ENCODE measurements at regions of chr2 and their contacts with region 1.

Region 1: GRCh38 chr2:205680067-205680466 is 2.2 kb upstream of the NRP2 start:
- DNase-seq: peak; percentile 79
- H3K4me3 ChIP-seq: no peak overlapping the region
- H3K27ac ChIP-seq: no peak overlapping the region
- H3K4me1 ChIP-seq: peaks cover 27% of the 10 kb centered on the region
- H3K27me3 ChIP-seq: no peaks in the 10 kb centered on the region
- CTCF ChIP-seq: peak; percentile 67 to 72
- POLR2A ChIP-seq: no peak

Region 2: GRCh38 chr2:204072443-204073324 is 1607.4 kb before region 1 on chr2:
- CTCF ChIA-PET with region 1: interaction called, 13 read pairs
- POLR2A ChIA-PET with region 1: no interaction called
- dilution Hi-C with region 1: no loop called
- intact Hi-C with region 1: loop called (anchors 1 kb)
- DNase-seq: peak; percentile 38
- H3K4me3 ChIP-seq: no peak overlapping the region
- H3K27ac ChIP-seq: no peak overlapping the region
- H3K4me1 ChIP-seq: no peaks in the 10 kb centered on the region
- H3K27me3 ChIP-seq: peaks cover 8 to 16% of the 10 kb centered on the region in 2 experiments
- CTCF ChIP-seq: peak; percentile 52 to 62
- POLR2A ChIP-seq: no peak

Region 3: GRCh38 chr2:204260162-204260877 is 1419.7 kb before region 1 on chr2:
- CTCF ChIA-PET with region 1: interaction called, 138 read pairs
- POLR2A ChIA-PET with region 1: interaction called, 4 read pairs
- dilution Hi-C with region 1: no loop called
- intact Hi-C with region 1: loop called (anchors 1 kb)
- DNase-seq: peak; percentile 86
- H3K4me3 ChIP-seq: no peak overlapping the region
- H3K27ac ChIP-seq: no peak overlapping the region
- H3K4me1 ChIP-seq: peaks cover 6% of the 10 kb centered on the region
- H3K27me3 ChIP-seq: peaks cover 0 to 2% of the 10 kb centered on the region in 2 experiments
- CTCF ChIP-seq: peak; percentile 63 to 72
- POLR2A ChIP-seq: no peak

Region 4: GRCh38 chr2:204691911-204692510 is 988.1 kb before region 1 on chr2:
- CTCF ChIA-PET with region 1: interaction called, 32 read pairs
- POLR2A ChIA-PET with region 1: interaction called, 4 read pairs
- dilution Hi-C with region 1: no loop called
- intact Hi-C with region 1: loop called (anchors 1 kb)
- DNase-seq: peak; percentile 90
- H3K4me3 ChIP-seq: no peak overlapping the region
- H3K27ac ChIP-seq: peak overlapping the region; percentile 36
- H3K4me1 ChIP-seq: peaks cover 18% of the 10 kb centered on the region
- H3K27me3 ChIP-seq: no peaks in the 10 kb centered on the region
- CTCF ChIP-seq: peak; percentile 68 to 72
- POLR2A ChIP-seq: no peak

Region 5: DNA sequence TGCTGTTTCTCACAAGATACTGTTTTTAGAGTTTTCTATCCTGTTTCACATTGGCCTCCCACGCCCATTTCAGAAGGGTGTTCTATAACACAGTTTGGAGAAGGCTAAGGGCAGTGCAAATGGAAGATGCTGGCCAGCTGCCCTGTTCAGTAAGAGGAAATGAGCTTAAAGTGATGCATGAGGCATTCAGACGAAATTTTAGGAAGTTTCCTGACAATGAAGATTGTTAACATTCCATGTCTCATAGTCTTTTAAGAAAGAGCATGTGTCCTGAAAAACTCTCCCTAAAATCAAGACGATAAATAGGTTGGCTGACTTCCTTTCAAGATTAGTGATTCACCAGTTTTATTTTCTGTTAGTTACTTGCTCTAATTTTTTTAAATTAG is 481.9 kb before region 1 on chr2:
- CTCF ChIA-PET with region 1: interaction called, 8 read pairs
- POLR2A ChIA-PET with region 1: interaction called, 3 read pairs
- dilution Hi-C with region 1: no loop called
- intact Hi-C with region 1: loop called (anchors 5 kb)
- DNase-seq: peak; percentile 83
- H3K4me3 ChIP-seq: peak overlapping the region in 1 of 3 experiments; percentile 15
- H3K27ac ChIP-seq: peak overlapping the region; percentile 79
- H3K4me1 ChIP-seq: peaks cover 22% of the 10 kb centered on the region
- H3K27me3 ChIP-seq: no peaks in the 10 kb centered on the region
- CTCF ChIP-seq: no peak
- POLR2A ChIP-seq: no peak

Region 6: DNA sequence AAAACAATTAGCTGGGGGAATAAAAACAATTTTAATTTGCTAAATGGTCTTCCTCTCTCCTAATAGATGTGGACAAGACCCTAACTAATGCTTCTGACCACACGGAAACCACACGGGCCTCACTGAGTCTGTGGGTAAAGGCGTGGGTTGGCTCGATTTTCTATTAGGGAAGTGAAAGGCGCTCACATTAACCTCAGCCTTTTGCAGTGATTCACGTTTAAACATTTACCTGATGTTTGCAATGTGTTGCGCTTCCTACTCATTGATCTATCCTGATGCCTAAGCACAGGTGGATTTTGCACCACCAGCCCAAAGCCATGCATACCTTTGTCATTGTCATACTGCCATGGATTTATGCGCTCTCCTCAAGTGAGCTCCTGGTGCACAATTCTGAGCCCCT is 33.4 kb before region 1 on chr2:
- CTCF ChIA-PET with region 1: no interaction called
- POLR2A ChIA-PET with region 1: no interaction called
- dilution Hi-C with region 1: no loop called
- intact Hi-C with region 1: no loop called
- DNase-seq: no peak
- H3K4me3 ChIP-seq: no peak overlapping the region
- H3K27ac ChIP-seq: no peak overlapping the region
- H3K4me1 ChIP-seq: peaks cover 3% of the 10 kb centered on the region
- H3K27me3 ChIP-seq: peaks cover 0 to 5% of the 10 kb centered on the region in 2 experiments
- CTCF ChIP-seq: no peak
- POLR2A ChIP-seq: no peak

Region 7: DNA sequence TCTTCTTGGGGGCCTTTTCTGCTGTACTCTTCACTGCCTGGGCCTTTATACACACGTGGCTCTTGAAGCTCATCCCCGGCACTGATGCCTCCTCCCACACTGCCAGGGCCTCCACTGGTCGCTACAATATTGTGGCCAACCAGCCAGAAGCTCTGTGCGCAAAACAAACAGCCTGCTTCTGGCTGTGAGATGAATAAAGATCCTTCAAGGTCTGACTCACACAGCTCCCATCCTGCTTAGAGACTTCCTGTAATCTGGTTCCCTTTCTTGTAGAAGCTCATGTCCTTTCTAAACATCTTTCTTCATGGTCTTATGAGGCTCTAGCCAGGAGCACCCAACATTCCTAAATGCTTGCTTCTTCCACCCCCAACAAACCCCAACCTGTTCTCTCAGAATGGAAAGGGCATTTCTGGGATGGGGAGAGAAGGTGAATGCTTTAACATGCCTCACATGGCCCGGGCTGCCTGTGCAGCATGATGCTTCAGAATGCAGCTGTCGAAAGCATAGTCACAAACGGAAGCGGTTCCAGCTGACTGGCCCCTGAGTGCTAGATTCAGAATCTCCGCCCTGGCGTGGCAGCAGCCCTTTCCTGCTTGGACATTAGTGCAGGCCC is 26.8 kb after region 1 on chr2:
- CTCF ChIA-PET with region 1: interaction called, 11 read pairs
- POLR2A ChIA-PET with region 1: interaction called, 18 read pairs
- dilution Hi-C with region 1: no loop called
- intact Hi-C with region 1: no loop called
- DNase-seq: peak; percentile 93
- H3K4me3 ChIP-seq: no peak overlapping the region
- H3K27ac ChIP-seq: peak overlapping the region; percentile 82
- H3K4me1 ChIP-seq: peaks cover 69% of the 10 kb centered on the region
- H3K27me3 ChIP-seq: no peaks in the 10 kb centered on the region
- CTCF ChIP-seq: no peak
- POLR2A ChIP-seq: no peak

Region 8: GRCh38 chr2:205925373-205926337 is 245.6 kb after region 1 on chr2:
- CTCF ChIA-PET with region 1: interaction called, 21 read pairs
- POLR2A ChIA-PET with region 1: no interaction called
- dilution Hi-C with region 1: no loop called
- intact Hi-C with region 1: loop called (anchors 1 kb)
- DNase-seq: peak; percentile 79
- H3K4me3 ChIP-seq: peak overlapping the region in 1 of 3 experiments; percentile 47
- H3K27ac ChIP-seq: no peak overlapping the region
- H3K4me1 ChIP-seq: peaks cover 17% of the 10 kb centered on the region
- H3K27me3 ChIP-seq: peaks cover 5 to 6% of the 10 kb centered on the region in 2 experiments
- CTCF ChIP-seq: peak; percentile 92 to 96
- POLR2A ChIP-seq: no peak